ENCODE measurements at regions of chr6 and their contacts with region 1.

Region 1: DNA sequence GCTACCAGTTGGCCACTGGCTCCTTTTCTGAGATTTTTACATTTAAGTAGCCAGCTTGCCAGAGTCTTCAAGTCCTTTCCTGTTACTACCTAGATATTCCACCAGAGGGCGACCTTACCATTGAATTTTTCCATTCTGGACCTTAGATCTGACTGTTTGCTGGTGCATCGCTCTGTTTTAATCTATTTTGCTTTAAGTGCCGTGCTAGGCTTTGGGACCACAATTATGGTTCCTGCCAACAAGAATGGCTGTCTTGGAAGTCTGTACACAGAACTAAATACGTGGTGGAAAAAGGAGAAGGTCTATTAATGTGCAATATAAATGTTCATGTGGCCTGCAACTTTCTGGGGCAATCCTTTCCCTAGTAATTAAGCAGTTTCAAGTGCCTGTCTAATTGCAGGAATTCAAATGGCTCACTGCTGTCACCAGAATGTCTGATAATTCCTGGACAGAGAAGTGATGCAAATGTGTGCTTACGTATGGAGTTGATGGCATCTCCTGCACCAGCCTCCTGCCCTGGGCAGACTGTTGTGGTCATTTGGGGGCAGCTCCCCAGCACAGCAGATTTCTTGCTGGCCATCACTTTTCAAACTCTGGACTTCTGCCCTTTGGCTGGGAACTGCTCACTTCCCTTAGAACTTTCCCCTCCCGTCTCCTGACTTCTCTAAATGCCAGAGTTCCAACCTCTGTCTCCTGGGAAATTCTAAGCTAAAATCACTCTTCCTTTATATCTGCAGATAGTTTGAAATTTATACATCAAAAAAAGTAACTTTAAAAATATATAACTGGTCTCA is 5.6 kb upstream of the HLA-DOA start:
- DNase-seq: peak; percentile 64
- H3K4me3 Mint-ChIP-seq: no peak overlapping the region
- H3K27ac Mint-ChIP-seq: no peak overlapping the region
- H3K4me1 Mint-ChIP-seq: peaks cover 12% of the 10 kb centered on the region
- H3K27me3 Mint-ChIP-seq: no peaks in the 10 kb centered on the region

Region 2: DNA sequence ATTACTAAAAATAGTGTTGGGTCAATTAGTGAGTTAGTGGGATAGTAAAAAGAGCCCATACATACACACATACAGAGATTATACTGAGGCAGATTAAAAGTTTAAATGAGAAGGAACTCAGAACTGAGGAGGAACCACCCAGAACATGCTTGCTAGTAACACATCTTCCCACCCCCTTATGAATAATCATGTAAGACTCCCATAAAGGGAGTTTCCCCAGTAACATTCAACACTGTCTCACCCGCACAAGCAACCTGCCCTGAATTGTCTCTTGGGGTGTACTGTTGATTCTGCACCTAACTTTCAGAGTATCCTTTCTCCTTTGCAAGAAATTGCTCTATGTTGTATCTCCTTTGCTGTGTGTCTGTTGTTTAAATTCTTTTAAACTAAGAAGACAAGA is 240.6 kb before region 1 on chr6:
- CTCF ChIA-PET with region 1: no interaction called
- intact Hi-C with region 1: no loop called
- DNase-seq: no peak
- H3K4me3 Mint-ChIP-seq: no peak overlapping the region
- H3K27ac Mint-ChIP-seq: no peak overlapping the region
- H3K4me1 Mint-ChIP-seq: no peaks in the 10 kb centered on the region
- H3K27me3 Mint-ChIP-seq: peaks cover 16% of the 10 kb centered on the region

Region 3: GRCh38 chr6:33049323-33050013 is 34.4 kb after region 1 on chr6:
- CTCF ChIA-PET with region 1: interaction called, 11 read pairs
- intact Hi-C with region 1: no loop called
- DNase-seq: no peak
- H3K4me3 Mint-ChIP-seq: no peak overlapping the region
- H3K27ac Mint-ChIP-seq: no peak overlapping the region
- H3K4me1 Mint-ChIP-seq: no peaks in the 10 kb centered on the region
- H3K27me3 Mint-ChIP-seq: peaks cover 25% of the 10 kb centered on the region

Region 4: GRCh38 chr6:33082702-33083101 is 67.7 kb after region 1 on chr6:
- CTCF ChIA-PET with region 1: interaction called, 9 read pairs
- intact Hi-C with region 1: loop called (anchors 2 kb)
- DNase-seq: peak; percentile 38
- H3K4me3 Mint-ChIP-seq: no peak overlapping the region
- H3K27ac Mint-ChIP-seq: no peak overlapping the region
- H3K4me1 Mint-ChIP-seq: peaks cover 3% of the 10 kb centered on the region
- H3K27me3 Mint-ChIP-seq: no peaks in the 10 kb centered on the region

Region 5: GRCh38 chr6:33091957-33092356 is 76.9 kb after region 1 on chr6:
- CTCF ChIA-PET with region 1: interaction called, 7 read pairs
- intact Hi-C with region 1: loop called (anchors 1 kb)
- DNase-seq: peak; percentile 73
- H3K4me3 Mint-ChIP-seq: no peak overlapping the region
- H3K27ac Mint-ChIP-seq: no peak overlapping the region
- H3K4me1 Mint-ChIP-seq: no peaks in the 10 kb centered on the region
- H3K27me3 Mint-ChIP-seq: peaks cover 2% of the 10 kb centered on the region